HEK293 (cell line): ENCODE measurements at regions of chr6 and their contacts with region 1.

Region 1: GRCh38 chr6:3410385-3411360 is 46.2 kb downstream of the SLC22A23 start:
- H3K4me3 ChIP-seq: no peak overlapping the region
- H3K27ac ChIP-seq: no peak overlapping the region
- H3K4me1 ChIP-seq: peaks cover 8% of the 10 kb centered on the region
- CTCF ChIP-seq: 0 out of 2 replicates have a peak, but pooled peaks have one; percentile 27

Region 2: GRCh38 chr6:3383525-3383924 is 27.1 kb before region 1 on chr6:
- CTCF ChIA-PET with region 1: interaction called, 17 read pairs
- POLR2A ChIA-PET with region 1: no interaction called
- H3K4me3 ChIP-seq: no peak overlapping the region
- H3K27ac ChIP-seq: no peak overlapping the region; the same call in 1 of the 2 replicates
- H3K4me1 ChIP-seq: peaks cover 51% of the 10 kb centered on the region
- CTCF ChIP-seq: no peak

Region 3: GRCh38 chr6:3421791-3422434 is 11.2 kb after region 1 on chr6:
- CTCF ChIA-PET with region 1: interaction called, 25 read pairs
- POLR2A ChIA-PET with region 1: no interaction called
- H3K4me3 ChIP-seq: no peak overlapping the region
- H3K27ac ChIP-seq: no peak overlapping the region
- H3K4me1 ChIP-seq: peaks cover 27% of the 10 kb centered on the region
- CTCF ChIP-seq: no peak

Region 4: GRCh38 chr6:3438190-3439167 is 27.8 kb after region 1 on chr6:
- CTCF ChIA-PET with region 1: interaction called, 14 read pairs
- POLR2A ChIA-PET with region 1: interaction called, 3 read pairs
- H3K4me3 ChIP-seq: no peak overlapping the region
- H3K27ac ChIP-seq: peak overlapping the region; percentile 88
- H3K4me1 ChIP-seq: peaks cover 23% of the 10 kb centered on the region
- CTCF ChIP-seq: no peak

Region 5: GRCh38 chr6:3732345-3733141 is 321.9 kb after region 1 on chr6:
- CTCF ChIA-PET with region 1: interaction called, 18 read pairs
- POLR2A ChIA-PET with region 1: no interaction called
- H3K4me3 ChIP-seq: no peak overlapping the region
- H3K27ac ChIP-seq: no peak overlapping the region
- H3K4me1 ChIP-seq: no peaks in the 10 kb centered on the region
- CTCF ChIP-seq: peak; percentile 88